Mammary epithelial cell (primary cell): ENCODE measurements at regions of chr14 and their contacts with region 1.

Region 1: DNA sequence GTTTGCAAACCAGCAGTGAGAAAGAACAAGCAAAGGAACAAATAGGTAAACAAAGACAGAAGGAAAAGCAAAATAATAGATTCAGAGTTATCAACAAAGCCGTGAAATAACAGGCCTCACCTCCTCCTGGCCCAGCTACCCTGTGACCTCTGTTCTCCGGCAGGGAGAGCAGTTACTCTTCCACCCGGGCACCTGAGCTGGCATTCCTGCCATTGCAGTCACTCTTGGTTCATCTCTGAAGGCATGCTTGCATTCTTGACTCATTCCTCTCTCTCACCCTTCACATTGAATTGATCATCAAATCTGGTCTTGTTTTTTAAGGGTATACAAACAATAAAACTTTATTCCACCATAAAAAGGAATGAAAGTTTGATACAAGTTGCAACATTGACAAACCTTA is 95.1 kb downstream of the TTC8 start:
- DNase-seq: peak; percentile 67
- H3K4me3 ChIP-seq: no peak overlapping the region
- H3K27ac ChIP-seq: no peak overlapping the region
- H3K4me1 ChIP-seq: no peaks in the 10 kb centered on the region
- H3K27me3 ChIP-seq: no peaks in the 10 kb centered on the region
- CTCF ChIP-seq: peak; percentile 23 to 55

Region 2: GRCh38 chr14:88955455-88955854 is 36.0 kb after region 1 on chr14:
- CTCF ChIA-PET with region 1: no interaction called
- dilution Hi-C with region 1: loop called (anchors 5 kb)
- in situ Hi-C with region 1: no loop called
- intact Hi-C with region 1: no loop called
- DNase-seq: no peak
- H3K4me3 ChIP-seq: no peak overlapping the region
- H3K27ac ChIP-seq: no peak overlapping the region
- H3K4me1 ChIP-seq: no peaks in the 10 kb centered on the region
- H3K27me3 ChIP-seq: no peaks in the 10 kb centered on the region
- CTCF ChIP-seq: no peak

Region 3: GRCh38 chr14:89013084-89013504 is 93.6 kb after region 1 on chr14:
- CTCF ChIA-PET with region 1: no interaction called
- dilution Hi-C with region 1: no loop called
- in situ Hi-C with region 1: no loop called
- intact Hi-C with region 1: loop called (anchors 1 kb)
- DNase-seq: no peak
- H3K4me3 ChIP-seq: no peak overlapping the region
- H3K27ac ChIP-seq: no peak overlapping the region
- H3K4me1 ChIP-seq: no peaks in the 10 kb centered on the region
- H3K27me3 ChIP-seq: no peaks in the 10 kb centered on the region
- CTCF ChIP-seq: peak; percentile 15 to 48

Region 4: GRCh38 chr14:89221109-89221810 is 301.8 kb after region 1 on chr14:
- CTCF ChIA-PET with region 1: no interaction called
- dilution Hi-C with region 1: no loop called
- in situ Hi-C with region 1: no loop called
- intact Hi-C with region 1: no loop called
- DNase-seq: peak; percentile 5
- H3K4me3 ChIP-seq: no peak overlapping the region
- H3K27ac ChIP-seq: no peak overlapping the region
- H3K4me1 ChIP-seq: no peaks in the 10 kb centered on the region
- H3K27me3 ChIP-seq: no peaks in the 10 kb centered on the region
- CTCF ChIP-seq: no peak